ENCODE measurements at regions of chr18 and their contacts with region 1.

Region 1: DNA sequence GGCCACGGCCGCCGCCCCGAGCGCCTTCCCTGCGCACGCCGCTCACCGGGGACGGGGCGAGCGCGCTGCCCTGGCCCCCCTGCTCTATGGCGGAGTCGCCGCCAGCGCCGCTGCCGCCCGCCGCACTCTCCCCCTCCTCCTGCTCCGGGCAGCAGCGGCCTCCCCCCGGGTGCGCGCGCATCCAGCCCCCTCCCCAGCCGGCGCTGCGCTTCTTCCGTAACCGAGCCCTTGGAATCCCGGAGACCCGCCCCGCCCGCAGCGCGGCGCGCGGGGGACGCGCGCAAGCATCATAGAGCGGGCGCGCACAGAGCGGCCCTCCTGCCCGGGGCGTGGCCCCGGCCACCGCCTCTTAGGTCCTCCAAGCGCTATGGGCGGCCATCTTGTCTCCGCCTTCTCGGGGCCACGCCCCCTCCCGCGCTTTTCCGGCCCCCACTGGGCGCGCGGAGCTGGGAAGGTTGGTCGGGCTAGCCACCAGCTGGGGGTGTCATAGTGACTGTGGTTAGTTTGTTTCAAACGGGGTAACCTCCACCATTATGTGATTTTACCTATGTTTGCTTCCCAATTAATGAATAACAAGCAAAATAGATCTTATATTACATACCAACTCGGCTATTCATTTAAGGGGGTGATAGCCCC is at the start of gene MBD2:
- DNase-seq: peak; percentile 96
- ATAC-seq: peak; percentile 95
- H3K4me3 Mint-ChIP-seq: peak within 1 kb of the TSS; percentile 96
- H3K27ac Mint-ChIP-seq: peak within 1 kb of the TSS; percentile 95
- H3K4me1 Mint-ChIP-seq: peaks cover 48% of the 10 kb centered on the region
- H3K27me3 Mint-ChIP-seq: no peaks in the 10 kb centered on the region
- total RNA-seq, gene MBD2: 148 to 178 TPM

Region 2: DNA sequence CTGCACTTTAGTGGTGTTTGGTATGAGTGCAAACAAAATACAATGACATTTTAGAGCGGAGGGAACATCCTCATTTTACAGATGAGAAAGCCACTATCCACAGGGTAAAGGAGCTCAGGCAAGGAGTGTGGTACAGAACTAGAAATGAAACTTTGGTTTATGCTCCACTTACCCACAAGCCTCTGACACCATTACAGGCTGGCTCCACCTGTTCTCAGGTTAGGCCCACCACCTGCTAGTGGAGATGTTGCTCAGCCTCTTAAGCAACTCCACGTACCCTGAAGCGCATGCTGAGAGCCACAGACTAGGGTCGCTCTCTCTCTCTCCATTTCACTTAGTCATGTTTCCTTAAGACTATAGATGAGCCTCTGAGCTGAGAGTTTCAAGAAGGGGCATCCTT is 130.0 kb before region 1 on chr18:
- CTCF ChIA-PET with region 1: no interaction called
- DNase-seq: no peak
- ATAC-seq: no peak
- H3K4me3 Mint-ChIP-seq: no peak overlapping the region
- H3K27ac Mint-ChIP-seq: no peak overlapping the region
- H3K4me1 Mint-ChIP-seq: peaks cover 2% of the 10 kb centered on the region
- H3K27me3 Mint-ChIP-seq: no peaks in the 10 kb centered on the region

Region 3: DNA sequence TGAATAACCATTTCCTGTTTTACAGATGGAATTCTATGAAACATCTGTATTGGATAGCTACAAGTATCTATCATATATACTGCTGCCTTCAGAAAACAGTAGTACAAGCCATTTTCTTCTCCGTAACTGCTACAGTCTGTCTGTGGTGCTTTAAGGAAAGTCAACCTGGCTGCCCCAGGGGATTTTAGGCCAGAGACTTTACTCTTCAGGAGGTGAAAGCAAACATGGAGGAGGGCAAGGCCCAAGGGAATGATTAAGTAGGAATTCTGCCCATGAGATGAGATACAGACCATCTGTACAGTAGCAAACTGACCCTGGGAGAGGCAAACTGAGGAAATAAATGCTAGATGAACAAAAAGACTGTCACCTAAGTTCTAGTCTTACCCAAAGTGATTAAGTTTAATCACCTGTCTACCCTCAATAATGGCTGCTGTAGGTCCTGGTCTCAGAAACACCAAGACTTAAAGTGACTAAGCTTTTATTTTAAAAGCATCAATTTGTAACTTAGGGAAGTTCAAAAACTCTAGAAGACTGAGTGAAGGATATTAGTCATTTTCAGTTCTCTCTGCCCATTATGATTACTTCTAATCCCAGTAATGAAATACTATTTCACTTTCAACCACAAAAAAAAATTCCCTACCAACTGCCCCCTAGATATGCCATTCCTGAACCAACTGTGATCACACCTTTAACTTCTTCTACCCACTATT is 14.9 kb before region 1 on chr18:
- CTCF ChIA-PET with region 1: interaction called, 10 read pairs
- DNase-seq: no peak
- ATAC-seq: peak; percentile 53
- H3K4me3 Mint-ChIP-seq: no peak overlapping the region
- H3K27ac Mint-ChIP-seq: peak overlapping the region; percentile 48
- H3K4me1 Mint-ChIP-seq: peaks cover 46% of the 10 kb centered on the region
- H3K27me3 Mint-ChIP-seq: no peaks in the 10 kb centered on the region

Region 4: GRCh38 chr18:54263904-54264371 is 39.4 kb after region 1 on chr18:
- CTCF ChIA-PET with region 1: interaction called, 53 read pairs
- DNase-seq: peak; percentile 54
- ATAC-seq: peak; percentile 88
- H3K4me3 Mint-ChIP-seq: peak overlapping the region; percentile 68
- H3K27ac Mint-ChIP-seq: peak overlapping the region; percentile 93
- H3K4me1 Mint-ChIP-seq: peaks cover 60% of the 10 kb centered on the region
- H3K27me3 Mint-ChIP-seq: no peaks in the 10 kb centered on the region

Region 5: GRCh38 chr18:54269893-54270844 is 45.7 kb after region 1 on chr18:
- CTCF ChIA-PET with region 1: interaction called, 53 read pairs
- DNase-seq: peak; percentile 87
- ATAC-seq: peak; percentile 57
- H3K4me3 Mint-ChIP-seq: peak overlapping the region; percentile 81
- H3K27ac Mint-ChIP-seq: peak overlapping the region; percentile 99
- H3K4me1 Mint-ChIP-seq: peaks cover 45% of the 10 kb centered on the region
- H3K27me3 Mint-ChIP-seq: no peaks in the 10 kb centered on the region

Region 6: DNA sequence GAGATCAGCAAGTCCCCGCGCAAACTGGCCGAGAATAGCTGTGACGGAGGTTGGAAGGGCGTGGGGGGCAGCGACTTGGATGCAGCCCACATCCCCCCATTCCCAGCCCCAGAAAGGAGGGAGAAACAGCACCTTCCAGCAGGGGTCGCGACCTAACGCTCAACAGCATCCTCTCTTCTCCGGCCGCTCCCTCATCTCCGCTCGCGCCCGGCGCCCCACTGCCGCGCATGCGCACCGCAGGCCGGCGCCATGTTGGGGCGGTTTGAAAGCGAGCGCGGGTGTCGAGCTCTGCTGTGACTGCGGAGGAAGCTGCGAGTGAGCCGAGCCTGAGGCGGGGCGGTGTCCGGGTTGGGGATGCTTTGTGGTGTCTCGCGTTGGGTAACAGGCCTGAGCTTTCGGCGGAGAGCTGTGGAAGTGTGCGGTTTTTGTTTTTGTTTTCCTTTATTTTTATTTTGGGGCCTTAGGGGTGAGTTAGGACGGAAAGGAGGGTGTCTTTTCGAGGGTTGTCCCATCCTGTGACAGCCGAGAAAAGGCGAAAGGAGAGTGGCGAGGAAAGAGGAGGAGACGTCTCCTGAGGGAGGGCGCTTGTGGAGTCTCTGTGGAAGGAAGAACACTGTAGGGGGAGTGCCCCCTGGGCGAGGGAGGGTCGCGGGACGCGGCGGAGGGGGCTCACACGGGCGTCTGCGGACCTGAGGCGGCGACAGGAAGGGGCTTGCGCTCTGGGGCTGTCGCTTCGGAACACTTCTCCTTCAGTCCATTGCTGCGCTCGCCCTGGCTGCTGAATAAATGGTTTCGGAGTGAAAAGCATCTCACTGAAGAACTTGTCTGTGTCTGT is 133.4 kb after region 1 on chr18 and contains the starts of genes C18orf54 and STARD6:
- CTCF ChIA-PET with region 1: interaction called, 19 read pairs
- DNase-seq: peak; percentile 94
- ATAC-seq: peak; percentile 96
- H3K4me3 Mint-ChIP-seq: peak within 1 kb of the TSS; percentile 95
- H3K27ac Mint-ChIP-seq: peak within 1 kb of the TSS; percentile 97
- H3K4me1 Mint-ChIP-seq: peaks cover 25% of the 10 kb centered on the region
- H3K27me3 Mint-ChIP-seq: no peaks in the 10 kb centered on the region
- total RNA-seq, gene C18orf54: 13.9 to 16.4 TPM
- total RNA-seq, gene STARD6: 0.20 to 0.61 TPM